ENCODE measurements at regions of chr11 and their contacts with region 1.

Region 1: DNA sequence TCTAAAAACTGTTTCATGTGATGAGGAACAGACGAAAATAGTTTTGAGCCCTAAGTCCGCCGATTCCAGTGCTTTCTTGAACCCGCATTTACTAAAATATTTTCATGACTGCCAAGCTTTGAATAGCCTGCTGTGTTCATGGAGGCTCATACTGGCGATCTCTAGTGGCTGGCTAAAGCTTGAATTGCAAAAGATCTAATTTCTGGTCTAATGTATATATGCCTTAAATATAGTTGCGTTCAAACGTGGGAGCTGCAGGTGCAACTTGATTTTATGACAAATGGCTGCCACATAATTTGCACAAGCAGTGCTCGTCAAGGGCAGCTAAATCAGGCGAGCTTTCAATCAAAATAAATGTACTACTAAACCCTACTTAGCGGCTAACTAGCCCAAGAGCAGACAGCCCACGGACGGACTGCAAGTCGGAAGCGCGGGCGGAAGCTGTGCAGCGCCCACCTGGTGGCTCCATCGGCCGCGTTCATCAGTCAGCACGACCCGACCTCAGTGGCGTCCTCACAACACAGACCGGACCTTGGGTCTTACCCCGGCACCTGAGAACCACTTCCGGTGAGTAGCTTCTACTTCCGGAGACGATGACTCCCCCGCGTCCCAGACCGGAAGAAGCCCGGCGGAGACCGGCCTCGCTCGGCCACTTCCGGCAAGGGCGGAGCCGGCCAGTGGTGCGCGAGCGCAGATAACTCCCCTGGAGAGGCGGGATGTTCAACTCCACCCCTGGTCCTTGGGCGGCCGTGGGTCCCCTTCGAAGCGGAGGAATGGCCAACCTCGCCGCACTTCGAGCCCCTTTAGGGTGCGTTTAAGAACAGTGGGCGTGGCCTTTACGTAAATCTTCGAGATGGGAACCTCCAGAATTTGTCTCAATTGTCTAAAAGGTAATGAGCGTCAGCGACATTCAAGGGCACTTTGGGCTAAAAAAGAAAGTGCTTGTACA is 6.1 kb downstream of the RPL27A start:
- DNase-seq: peak; percentile 90
- H3K4me3 Mint-ChIP-seq: peak overlapping the region; percentile 97
- H3K27ac Mint-ChIP-seq: peak overlapping the region; percentile 96
- H3K4me1 Mint-ChIP-seq: peaks cover 53% of the 10 kb centered on the region
- H3K27me3 Mint-ChIP-seq: no peaks in the 10 kb centered on the region

Region 2: DNA sequence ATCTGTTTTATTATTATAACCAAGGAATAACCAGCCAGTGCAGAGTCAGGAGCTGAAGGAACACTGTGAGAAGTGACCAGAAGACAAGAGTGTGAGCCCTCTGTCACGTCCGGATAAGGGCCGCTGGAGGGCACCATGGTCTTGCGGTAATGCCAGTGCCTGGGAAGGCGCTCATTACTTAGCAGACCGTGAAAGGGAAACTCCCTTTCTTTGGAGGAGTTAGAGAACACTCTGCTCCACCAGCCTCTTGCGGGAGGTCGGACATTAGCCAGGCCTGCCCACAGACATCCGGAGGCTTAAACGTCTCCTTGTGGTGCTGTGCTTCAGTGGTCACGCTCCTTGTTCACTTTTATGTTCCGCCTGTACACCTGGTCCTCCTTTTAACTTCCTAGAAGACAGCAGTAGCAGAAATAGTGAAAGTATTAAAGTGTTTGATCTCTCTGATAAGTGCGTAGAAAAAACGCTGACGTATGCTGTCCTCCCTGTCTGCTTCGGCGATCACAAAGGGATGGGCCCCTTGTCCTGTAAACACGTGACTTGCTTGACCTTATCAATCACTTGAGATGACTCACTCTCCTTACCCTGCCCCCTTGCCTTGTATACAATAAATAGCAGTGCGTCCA is 304.4 kb before region 1 on chr11:
- CTCF ChIA-PET with region 1: no interaction called
- intact Hi-C with region 1: no loop called
- DNase-seq: no peak
- H3K4me3 Mint-ChIP-seq: no peak overlapping the region
- H3K27ac Mint-ChIP-seq: no peak overlapping the region
- H3K4me1 Mint-ChIP-seq: no peaks in the 10 kb centered on the region
- H3K27me3 Mint-ChIP-seq: no peaks in the 10 kb centered on the region

Region 3: DNA sequence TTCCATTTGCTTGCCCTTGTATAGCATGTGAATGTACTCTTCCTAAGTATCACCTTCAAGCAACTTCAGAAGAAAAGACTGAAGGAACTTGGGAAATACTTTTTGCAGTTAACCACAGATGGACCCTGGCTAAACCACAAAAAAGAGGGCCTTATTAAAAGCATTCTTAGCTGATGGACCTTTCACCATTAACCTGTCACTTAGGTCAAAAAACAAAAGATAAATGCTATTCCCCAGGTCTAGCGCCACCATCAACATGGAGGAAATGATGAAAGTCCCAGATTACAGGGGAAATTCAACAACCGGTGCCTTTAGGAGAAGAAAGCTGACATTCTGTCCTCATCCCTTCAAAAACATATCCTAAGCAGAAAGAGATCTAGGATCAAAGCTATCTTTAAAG is 124.2 kb before region 1 on chr11:
- CTCF ChIA-PET with region 1: no interaction called
- intact Hi-C with region 1: no loop called
- DNase-seq: no peak
- H3K4me3 Mint-ChIP-seq: no peak overlapping the region
- H3K27ac Mint-ChIP-seq: no peak overlapping the region
- H3K4me1 Mint-ChIP-seq: peaks cover 5% of the 10 kb centered on the region
- H3K27me3 Mint-ChIP-seq: peaks cover 18% of the 10 kb centered on the region

Region 4: GRCh38 chr11:8813658-8814057 is 125.0 kb after region 1 on chr11:
- CTCF ChIA-PET with region 1: no interaction called
- intact Hi-C with region 1: loop called (anchors 1 kb)
- DNase-seq: peak; percentile 67
- H3K4me3 Mint-ChIP-seq: no peak overlapping the region
- H3K27ac Mint-ChIP-seq: no peak overlapping the region
- H3K4me1 Mint-ChIP-seq: peaks cover 7% of the 10 kb centered on the region
- H3K27me3 Mint-ChIP-seq: peaks cover 14% of the 10 kb centered on the region

Region 5: GRCh38 chr11:9060700-9061111 is 372.0 kb after region 1 on chr11:
- CTCF ChIA-PET with region 1: no interaction called
- intact Hi-C with region 1: loop called (anchors 2 kb)
- DNase-seq: peak; percentile 89
- H3K4me3 Mint-ChIP-seq: no peak overlapping the region
- H3K27ac Mint-ChIP-seq: no peak overlapping the region
- H3K4me1 Mint-ChIP-seq: peaks cover 12% of the 10 kb centered on the region
- H3K27me3 Mint-ChIP-seq: peaks cover 13% of the 10 kb centered on the region

Region 6: GRCh38 chr11:9506489-9507276 is 818.0 kb after region 1 on chr11:
- CTCF ChIA-PET with region 1: no interaction called
- intact Hi-C with region 1: loop called (anchors 10 kb)
- DNase-seq: peak; percentile 90
- H3K4me3 Mint-ChIP-seq: no peak overlapping the region
- H3K27ac Mint-ChIP-seq: no peak overlapping the region
- H3K4me1 Mint-ChIP-seq: no peaks in the 10 kb centered on the region
- H3K27me3 Mint-ChIP-seq: no peaks in the 10 kb centered on the region

Region 7: GRCh38 chr11:10293423-10294289 is 1605.0 kb after region 1 on chr11 and contains the start of gene SBF2:
- CTCF ChIA-PET with region 1: no interaction called
- intact Hi-C with region 1: loop called (anchors 10 kb)
- DNase-seq: peak; percentile 76
- H3K4me3 Mint-ChIP-seq: peak within 1 kb of the TSS; percentile 73
- H3K27ac Mint-ChIP-seq: no peak within 1 kb of the TSS
- H3K4me1 Mint-ChIP-seq: peaks cover 31% of the 10 kb centered on the region
- H3K27me3 Mint-ChIP-seq: peaks cover 27% of the 10 kb centered on the region
- total RNA-seq, gene SBF2: 8.7 to 9.9 TPM

Measured in activated naive CD4-positive, alpha-beta T cell treated with anti-CD3 and anti-CD28 coated beads for 36 hours (primary cell).